ENCODE measurements at regions of chr14 and their contacts with region 1.

Region 1: DNA sequence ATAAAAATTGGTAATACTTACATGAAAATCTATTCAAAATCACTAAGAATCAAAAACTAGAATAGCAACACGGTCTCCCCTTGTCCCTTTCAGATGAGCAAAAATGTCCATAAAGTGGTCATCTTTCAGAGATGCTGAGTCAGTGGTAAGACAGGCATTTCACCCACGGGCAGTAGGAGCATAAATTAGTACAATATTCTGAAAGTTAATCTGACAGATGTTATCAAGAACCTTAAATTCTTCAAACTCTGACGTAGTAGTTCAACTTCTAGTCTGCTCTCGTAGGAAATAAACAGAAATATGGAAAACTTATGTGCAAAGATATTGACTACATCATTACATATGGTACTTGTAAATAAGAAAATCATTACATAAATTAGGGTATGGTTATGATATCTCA is 33.1 kb upstream of the GNPNAT1 start:
- DNase-seq: no peak
- CTCF ChIP-seq: no peak

Region 2: DNA sequence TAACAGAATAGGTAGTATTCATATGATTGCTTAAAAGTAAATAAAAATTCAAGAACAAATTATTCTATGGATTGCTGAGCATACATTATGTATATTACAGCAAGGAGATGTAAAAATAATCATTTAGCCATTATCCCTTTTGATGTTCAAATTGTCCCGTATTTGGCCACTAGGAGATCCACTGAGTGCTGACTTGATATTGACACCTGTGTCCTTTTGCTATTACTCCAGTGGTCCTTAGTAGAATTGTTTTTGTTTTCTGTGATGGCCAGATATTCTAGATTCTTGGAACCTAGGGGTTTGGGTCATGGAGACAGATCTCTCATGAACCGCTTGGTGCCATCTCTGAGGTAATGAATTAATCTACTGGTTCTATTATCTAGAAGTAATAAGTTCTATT is 145.9 kb before region 1 on chr14:
- in situ Hi-C with region 1: no loop called
- DNase-seq: no peak
- CTCF ChIP-seq: no peak

Region 3: GRCh38 chr14:52895000-52895399 is 70.5 kb after region 1 on chr14:
- in situ Hi-C with region 1: no loop called
- DNase-seq: peak; percentile 32
- CTCF ChIP-seq: no peak

Region 4: GRCh38 chr14:52961060-52961639 is 136.6 kb after region 1 on chr14:
- in situ Hi-C with region 1: loop called (anchors 10 kb)
- DNase-seq: peak; percentile 73
- CTCF ChIP-seq: peak; percentile 36

Region 5: DNA sequence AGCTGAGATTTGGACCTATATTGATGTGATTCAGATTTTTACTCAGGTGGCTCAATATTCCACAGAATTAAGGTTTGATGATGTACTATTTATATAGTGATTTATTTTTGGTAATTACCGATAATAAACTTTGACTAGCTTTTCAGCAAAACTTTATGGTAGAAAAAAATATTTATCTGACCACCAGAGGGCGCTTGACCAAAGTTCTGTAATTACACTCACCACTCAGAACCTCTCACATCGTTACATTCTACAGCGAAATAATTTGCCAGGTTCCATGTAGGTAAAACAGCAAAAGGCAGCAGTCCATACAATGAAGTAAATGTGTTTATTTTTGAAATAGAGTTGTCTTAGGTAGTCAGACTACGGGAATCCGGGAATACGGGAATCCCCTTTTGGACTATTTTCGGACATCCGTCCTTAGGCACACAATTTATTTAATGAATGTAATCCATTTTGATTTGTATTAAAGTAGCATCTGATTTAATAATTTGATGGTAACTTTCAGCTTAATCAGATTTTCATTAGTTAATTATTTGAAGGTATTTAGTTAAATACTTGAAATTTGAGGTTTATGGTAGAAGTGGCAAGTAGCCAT is 471.6 kb after region 1 on chr14:
- in situ Hi-C with region 1: loop called (anchors 10 kb)
- DNase-seq: peak; percentile 19
- CTCF ChIP-seq: peak; percentile 26